A673 (cell line): ENCODE measurements at regions of chr4 and their contacts with region 1.

Region 1: GRCh38 chr4:183455431-183456195 is 11.2 kb downstream of the CDKN2AIP start:
- DNase-seq: no peak
- H3K4me3 ChIP-seq: no peak overlapping the region
- H3K27ac ChIP-seq: no peak overlapping the region
- H3K4me1 ChIP-seq: no peaks in the 10 kb centered on the region
- H3K27me3 ChIP-seq: no peaks in the 10 kb centered on the region
- CTCF ChIP-seq: no peak

Region 2: GRCh38 chr4:182975806-182976205 is 479.8 kb before region 1 on chr4:
- CTCF ChIA-PET with region 1: no interaction called
- POLR2A ChIA-PET with region 1: no interaction called
- intact Hi-C with region 1: no loop called
- DNase-seq: peak; percentile 79
- H3K4me3 ChIP-seq: no peak overlapping the region
- H3K27ac ChIP-seq: no peak overlapping the region
- H3K4me1 ChIP-seq: peaks cover 3% of the 10 kb centered on the region
- H3K27me3 ChIP-seq: no peaks in the 10 kb centered on the region
- CTCF ChIP-seq: no peak

Region 3: DNA sequence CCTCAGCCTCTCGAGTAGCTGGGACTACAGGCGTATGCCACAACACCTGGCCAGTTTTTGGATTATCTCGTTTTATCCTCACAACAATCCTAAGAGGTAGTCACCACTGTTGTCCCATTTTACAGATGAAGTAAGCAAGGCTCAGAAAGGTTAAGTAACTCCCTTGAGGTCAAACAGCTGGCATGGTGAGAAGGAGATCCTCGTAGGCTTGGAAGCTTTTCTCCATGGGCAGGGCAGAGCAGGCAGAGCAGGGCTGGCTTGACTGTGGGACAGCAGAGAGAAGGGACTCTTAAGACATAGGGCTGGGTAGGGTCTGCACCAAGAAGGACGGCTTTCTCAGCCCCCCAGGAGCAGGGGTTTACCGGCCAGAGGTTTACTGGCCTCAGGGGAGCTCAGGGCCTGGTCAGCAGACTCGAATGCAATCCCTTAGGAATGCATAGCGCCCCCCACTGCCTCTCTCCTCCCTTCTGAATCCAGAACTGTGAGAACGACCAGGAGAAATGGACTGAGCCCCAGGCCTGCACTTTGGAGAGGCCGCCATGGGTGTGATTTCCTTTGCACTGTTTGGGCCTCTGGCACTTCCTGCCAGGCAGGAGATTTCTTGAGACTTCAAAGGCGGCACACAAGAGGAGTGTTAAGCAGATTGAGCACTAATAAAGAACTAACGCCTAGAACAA is 25.2 kb before region 1 on chr4:
- CTCF ChIA-PET with region 1: no interaction called
- POLR2A ChIA-PET with region 1: interaction called, 14 read pairs
- intact Hi-C with region 1: no loop called
- DNase-seq: no peak
- H3K4me3 ChIP-seq: no peak overlapping the region
- H3K27ac ChIP-seq: no peak overlapping the region
- H3K4me1 ChIP-seq: no peaks in the 10 kb centered on the region
- H3K27me3 ChIP-seq: no peaks in the 10 kb centered on the region
- CTCF ChIP-seq: no peak

Region 4: GRCh38 chr4:183471946-183472708 is 16.5 kb after region 1 on chr4:
- CTCF ChIA-PET with region 1: no interaction called
- POLR2A ChIA-PET with region 1: no interaction called
- intact Hi-C with region 1: no loop called
- DNase-seq: peak; percentile 85
- H3K4me3 ChIP-seq: no peak overlapping the region
- H3K27ac ChIP-seq: no peak overlapping the region
- H3K4me1 ChIP-seq: no peaks in the 10 kb centered on the region
- H3K27me3 ChIP-seq: no peaks in the 10 kb centered on the region
- CTCF ChIP-seq: peak; percentile 95